ENCODE measurements at regions of chr4 and their contacts with region 1.

Region 1: GRCh38 chr4:154399259-154399974 is 92.2 kb downstream of the DCHS2 start:
- DNase-seq: peak; percentile 26 to 50
- H3K4me3 ChIP-seq: peak overlapping the region; percentile 25 to 36
- H3K27ac ChIP-seq: peak overlapping the region; percentile 73 to 85
- H3K4me1 ChIP-seq: no peaks in the 10 kb centered on the region
- H3K27me3 ChIP-seq: no peaks in the 10 kb centered on the region
- CTCF ChIP-seq: peak; percentile 66 to 81 (median 68)
- POLR2A ChIP-seq: no peak

Region 2: GRCh38 chr4:154506253-154506652 is 106.8 kb after region 1 on chr4:
- intact Hi-C with region 1: loop called (anchors 1 kb)
- DNase-seq: peak in 1 of 2 donors; percentile 51
- H3K4me3 ChIP-seq: no peak overlapping the region
- H3K27ac ChIP-seq: no peak overlapping the region
- H3K4me1 ChIP-seq: no peaks in the 10 kb centered on the region
- H3K27me3 ChIP-seq: no peaks in the 10 kb centered on the region
- CTCF ChIP-seq: peak; percentile 57 to 81 (median 66)
- POLR2A ChIP-seq: no peak

Measured in uterus (tissue), 4 donors.